ENCODE measurements at regions of chr4 and their contacts with region 1.

Region 1: GRCh38 chr4:94406668-94407437 is 44.9 kb upstream of the PDLIM5 start:
- DNase-seq: peak; percentile 87
- H3K4me3 ChIP-seq: no peak overlapping the region
- H3K27ac ChIP-seq: no peak overlapping the region
- H3K4me1 ChIP-seq: no peaks in the 10 kb centered on the region
- H3K27me3 ChIP-seq: no peaks in the 10 kb centered on the region
- CTCF ChIP-seq: peak; percentile 72 to 84 (median 75)
- POLR2A ChIP-seq: no peak

Region 2: GRCh38 chr4:94451695-94452475 is 45.0 kb after region 1 on chr4 and contains the start of gene PDLIM5:
- intact Hi-C with region 1: loop called (anchors 2 kb)
- DNase-seq: peak; percentile 94
- H3K4me3 ChIP-seq: peak within 1 kb of the TSS; percentile 97
- H3K27ac ChIP-seq: peak within 1 kb of the TSS; percentile 96 to 97
- H3K4me1 ChIP-seq: no peaks in the 10 kb centered on the region
- H3K27me3 ChIP-seq: no peaks in the 10 kb centered on the region
- CTCF ChIP-seq: no peak
- POLR2A ChIP-seq: peak; percentile 96
- total RNA-seq, gene PDLIM5: 115 to 228 TPM

Region 3: DNA sequence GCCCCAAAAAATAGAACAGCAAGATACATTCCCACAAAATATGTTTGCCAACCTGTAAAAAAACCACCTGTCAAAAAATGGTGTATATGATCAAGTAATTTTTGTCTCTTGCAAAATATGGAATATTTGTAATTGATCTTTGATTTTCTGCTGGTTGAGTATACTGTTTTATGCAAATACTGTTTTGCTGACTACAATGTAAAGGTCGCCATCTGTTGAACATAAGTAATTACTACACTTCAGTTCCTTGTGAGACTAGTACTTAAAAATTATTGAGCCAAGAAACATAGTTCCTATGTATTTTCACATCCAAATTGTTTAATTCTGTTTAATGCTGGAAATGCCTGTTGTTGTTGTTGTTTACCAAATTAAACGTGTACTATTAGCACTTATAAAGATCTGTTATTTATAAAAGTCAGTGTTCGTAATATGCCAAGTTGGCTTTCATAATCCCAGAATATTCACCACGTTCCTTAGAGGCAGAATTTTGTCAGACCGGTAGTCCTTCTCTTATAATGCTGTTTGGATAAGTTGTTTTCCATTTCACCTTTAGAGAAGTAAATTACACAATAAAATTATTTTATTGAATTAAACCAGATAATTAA is 189.1 kb after region 1 on chr4:
- intact Hi-C with region 1: loop called (anchors 5 kb)
- DNase-seq: peak; percentile 21
- H3K4me3 ChIP-seq: no peak overlapping the region
- H3K27ac ChIP-seq: no peak overlapping the region
- H3K4me1 ChIP-seq: no peaks in the 10 kb centered on the region
- H3K27me3 ChIP-seq: no peaks in the 10 kb centered on the region
- CTCF ChIP-seq: peak in 3 of 4 experiments; percentile 55 to 79 (median 74)
- POLR2A ChIP-seq: no peak

Region 4: DNA sequence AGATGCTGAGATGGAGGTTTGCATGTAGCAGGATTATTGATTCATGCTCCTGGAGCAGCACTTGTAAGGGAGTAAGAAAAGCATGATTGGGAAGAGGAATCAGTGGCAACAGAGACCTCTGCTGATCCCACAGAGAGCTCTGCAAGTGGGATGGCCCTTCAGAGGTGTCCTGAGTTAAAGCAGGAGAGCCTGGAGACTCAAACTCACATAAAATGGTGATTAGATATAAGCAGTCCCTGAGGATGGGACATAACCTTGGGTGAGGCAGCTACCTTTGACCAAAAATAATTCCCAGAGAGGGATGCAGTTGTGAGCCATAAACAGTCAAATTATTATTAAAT is 325.5 kb after region 1 on chr4:
- intact Hi-C with region 1: loop called (anchors 10 kb)
- DNase-seq: no peak
- H3K4me3 ChIP-seq: no peak overlapping the region
- H3K27ac ChIP-seq: no peak overlapping the region
- H3K4me1 ChIP-seq: no peaks in the 10 kb centered on the region
- H3K27me3 ChIP-seq: no peaks in the 10 kb centered on the region
- CTCF ChIP-seq: no peak
- POLR2A ChIP-seq: no peak